Tibial artery (tissue), 4 donors: ENCODE measurements at regions of chr10 and their contacts with region 1.

Region 1: DNA sequence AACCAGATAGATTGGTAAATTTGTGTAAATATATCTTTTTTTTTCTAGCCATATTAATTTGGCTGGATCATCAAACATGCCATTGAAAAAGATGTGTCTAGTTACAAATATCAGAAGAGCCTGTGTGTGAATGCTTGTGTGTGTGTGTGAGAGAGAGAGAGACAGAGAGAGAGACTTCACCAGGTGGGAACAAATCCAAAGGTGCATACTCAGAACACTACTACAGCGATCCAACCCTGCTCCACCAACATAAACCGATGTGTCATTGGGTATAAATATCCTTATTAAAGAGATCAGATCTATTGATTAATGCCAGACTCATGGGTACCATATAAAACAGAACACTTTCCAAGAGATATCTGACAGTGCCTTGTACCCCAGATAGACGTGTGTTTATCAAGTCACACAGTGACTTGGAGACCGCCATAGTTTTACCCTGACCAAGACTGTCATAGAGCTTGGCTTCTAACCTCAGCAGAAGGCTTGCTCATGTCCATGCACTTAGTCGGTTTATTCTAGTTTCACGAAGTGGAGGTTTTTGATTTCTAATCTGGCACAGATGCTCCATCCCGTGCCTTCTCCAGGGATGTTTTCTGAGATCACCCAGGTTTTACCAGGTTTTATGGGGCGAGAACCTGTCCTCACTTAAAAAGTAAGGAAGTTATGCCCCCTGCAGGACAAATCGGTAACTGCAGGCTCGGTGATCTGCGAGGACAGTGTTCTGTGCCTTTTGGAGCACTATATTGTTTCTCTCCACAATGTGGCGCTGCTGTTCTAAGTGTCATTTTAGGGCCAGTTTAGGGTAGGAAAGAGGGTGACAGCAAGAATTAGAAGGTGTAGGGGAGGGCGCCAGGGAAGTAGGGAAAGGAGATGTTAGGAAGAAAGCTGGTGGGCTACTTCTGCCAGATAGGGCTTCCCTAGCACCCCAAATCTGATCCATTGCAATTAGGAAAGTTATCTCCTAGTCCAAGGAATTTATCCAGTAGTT is 29.3 kb upstream of the WNT8B start:
- DNase-seq: peak; percentile 91 to 93
- H3K4me3 ChIP-seq: no peak overlapping the region
- H3K27ac ChIP-seq: no peak overlapping the region
- H3K4me1 ChIP-seq: no peaks in the 10 kb centered on the region
- H3K27me3 ChIP-seq: peaks cover 0 to 4% of the 10 kb centered on the region in 2 donors
- CTCF ChIP-seq: peak; percentile 95 to 100

Region 2: DNA sequence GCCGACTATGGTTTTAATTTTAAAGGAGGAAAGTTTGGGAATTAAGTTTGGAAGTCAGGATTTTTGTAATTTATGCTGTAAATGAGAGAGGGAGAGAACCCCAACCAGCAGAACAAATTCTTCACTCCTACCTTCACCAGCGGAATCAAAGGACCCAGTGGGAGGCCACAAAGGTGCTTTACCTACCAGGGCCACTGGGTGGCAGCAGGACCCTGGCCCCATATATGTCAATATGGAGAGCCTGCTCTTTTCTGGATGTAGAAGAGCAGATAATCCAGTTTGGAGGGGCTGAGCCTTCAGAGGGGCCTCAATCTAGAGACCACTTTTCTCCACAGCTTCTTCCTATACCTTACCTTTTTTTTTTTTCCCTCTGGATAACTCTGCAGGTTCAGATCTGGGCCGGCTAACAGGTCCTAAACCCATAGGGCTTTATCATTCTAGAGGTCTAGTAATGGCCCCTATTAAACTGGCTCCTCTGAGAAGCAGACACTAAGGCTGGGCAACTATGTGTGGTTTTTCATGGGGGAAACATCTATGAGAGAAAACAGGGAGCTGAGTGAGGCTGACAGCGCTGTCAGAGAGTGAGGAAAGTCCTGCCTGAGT is 95.0 kb before region 1 on chr10:
- intact Hi-C with region 1: loop called (anchors 1 kb)
- DNase-seq: peak; percentile 76 to 78
- H3K4me3 ChIP-seq: no peak overlapping the region
- H3K27ac ChIP-seq: no peak overlapping the region
- H3K4me1 ChIP-seq: peaks cover 0 to 9% (median 0%) of the 10 kb centered on the region in 4 donors
- H3K27me3 ChIP-seq: peaks cover 0 to 18% of the 10 kb centered on the region in 2 donors
- CTCF ChIP-seq: peak; percentile 91 to 93